PC-3 (cell line): ENCODE measurements at regions of chr1 and their contacts with region 1.

Region 1: GRCh38 chr1:176374967-176375569 is 87.9 kb upstream of the PAPPA2 start:
- DNase-seq: peak; percentile 74
- ATAC-seq: peak; percentile 78
- H3K4me3 ChIP-seq: no peak overlapping the region
- H3K27ac ChIP-seq: no peak overlapping the region
- H3K4me1 ChIP-seq: no peaks in the 10 kb centered on the region
- H3K27me3 ChIP-seq: no peaks in the 10 kb centered on the region; the same call in 1 of the 2 replicates
- CTCF ChIP-seq: peak; percentile 82

Region 2: GRCh38 chr1:176494436-176494835 is 119.4 kb after region 1 on chr1:
- CTCF ChIA-PET with region 1: no interaction called
- POLR2A ChIA-PET with region 1: no interaction called
- intact Hi-C with region 1: no loop called
- DNase-seq: no peak
- ATAC-seq: no peak
- H3K4me3 ChIP-seq: no peak overlapping the region
- H3K27ac ChIP-seq: no peak overlapping the region
- H3K4me1 ChIP-seq: no peaks in the 10 kb centered on the region
- H3K27me3 ChIP-seq: 0 out of 2 replicates have a peak, but pooled peaks cover 4% of the 10 kb centered on the region
- CTCF ChIP-seq: no peak

Region 3: DNA sequence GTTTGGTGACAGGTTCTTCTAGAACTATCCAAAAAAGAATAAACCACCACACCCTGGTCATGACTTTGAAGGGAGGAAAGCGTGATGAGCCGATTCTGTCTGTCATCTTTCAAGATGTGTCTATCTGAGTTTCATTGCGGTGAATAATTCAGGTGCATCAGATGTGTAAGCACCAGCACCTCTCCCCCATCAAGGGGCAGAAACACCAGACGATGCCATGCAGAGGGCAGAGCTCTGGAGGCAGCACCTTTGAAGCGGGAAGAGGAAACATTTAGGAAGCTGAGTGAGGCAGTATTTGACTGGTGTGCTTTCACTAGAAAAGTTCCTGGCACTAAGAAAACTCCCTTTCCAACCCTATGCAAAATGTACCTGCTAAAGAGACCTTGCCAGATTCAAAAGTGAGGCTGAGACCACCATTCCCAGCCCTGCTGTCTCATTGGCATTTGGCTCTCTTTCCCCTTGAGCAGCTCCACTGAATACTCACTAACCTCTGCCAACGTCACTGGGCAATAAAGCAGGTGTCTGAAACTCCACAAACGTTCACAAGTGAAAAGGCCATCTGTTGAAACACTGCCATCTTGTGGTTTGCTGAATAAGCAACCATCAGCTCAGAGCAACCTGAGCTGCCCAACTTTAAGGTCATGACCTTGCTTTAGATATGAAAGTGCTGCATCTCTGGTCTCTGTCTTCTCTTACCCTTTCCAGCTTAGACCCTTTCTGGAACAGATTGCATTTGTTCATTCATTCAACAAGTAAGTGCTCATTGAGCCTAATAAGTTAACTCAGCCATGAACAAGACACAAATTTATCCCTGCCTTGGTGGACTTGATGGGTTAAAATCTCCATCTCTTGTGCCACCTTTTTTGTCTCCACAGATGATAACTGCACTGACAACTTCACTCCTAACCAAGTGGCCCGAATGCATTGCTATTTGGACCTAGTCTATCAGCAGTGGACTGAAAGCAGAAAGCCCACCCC is 316.5 kb after region 1 on chr1:
- CTCF ChIA-PET with region 1: no interaction called
- POLR2A ChIA-PET with region 1: no interaction called
- intact Hi-C with region 1: loop called (anchors 5 kb)
- DNase-seq: peak; percentile 59
- ATAC-seq: peak; percentile 64
- H3K4me3 ChIP-seq: no peak overlapping the region
- H3K27ac ChIP-seq: no peak overlapping the region
- H3K4me1 ChIP-seq: peaks cover 3% of the 10 kb centered on the region
- H3K27me3 ChIP-seq: 0 out of 2 replicates have a peak, but pooled peaks cover 4% of the 10 kb centered on the region
- CTCF ChIP-seq: peak; percentile 77

Region 4: DNA sequence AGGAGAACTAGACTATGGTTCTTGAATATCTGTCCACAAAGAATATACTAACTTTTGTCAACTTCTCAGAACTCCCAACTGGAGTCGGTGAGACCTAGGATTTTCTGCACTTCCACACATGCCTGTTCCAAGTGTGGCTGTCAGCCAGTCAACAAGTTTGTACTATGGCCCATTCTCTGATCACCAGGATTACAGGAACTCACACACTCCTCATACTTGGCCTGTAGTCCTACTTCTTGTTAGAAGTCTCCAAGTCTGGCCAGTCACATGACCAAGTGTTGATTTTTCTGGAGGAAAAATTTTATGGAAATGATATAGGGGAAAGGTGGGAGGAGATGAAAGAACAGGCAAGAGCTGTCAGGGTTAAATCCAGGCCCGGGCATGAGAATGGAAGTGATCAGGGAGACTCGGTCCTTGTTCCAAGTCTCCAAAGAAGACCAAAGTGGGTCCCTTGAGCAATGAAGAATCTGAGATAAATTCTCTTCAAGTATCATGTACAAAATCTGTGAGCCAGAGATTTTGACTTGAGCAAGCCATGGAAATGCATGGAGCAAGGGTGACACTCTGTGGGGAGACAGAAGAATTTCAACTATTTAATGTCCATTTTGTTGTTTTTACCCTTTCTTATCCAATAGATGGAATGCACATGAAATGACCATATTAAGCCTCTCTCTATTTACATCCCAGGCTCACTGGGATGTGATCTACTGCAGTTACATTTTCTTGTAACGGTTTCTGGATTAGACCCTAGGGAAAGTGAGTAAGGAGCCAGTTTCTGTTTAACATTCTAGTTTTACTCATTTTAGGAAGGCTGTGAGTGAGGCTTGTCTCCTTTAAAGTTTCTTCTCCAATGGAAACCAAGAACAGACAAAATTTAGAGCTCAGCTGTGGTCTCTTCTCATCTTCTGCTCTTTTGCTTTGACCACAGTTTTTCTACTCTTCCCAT is 468.6 kb after region 1 on chr1:
- CTCF ChIA-PET with region 1: no interaction called
- POLR2A ChIA-PET with region 1: no interaction called
- intact Hi-C with region 1: loop called (anchors 1 kb)
- DNase-seq: peak; percentile 29
- ATAC-seq: no peak
- H3K4me3 ChIP-seq: no peak overlapping the region
- H3K27ac ChIP-seq: no peak overlapping the region
- H3K4me1 ChIP-seq: no peaks in the 10 kb centered on the region
- H3K27me3 ChIP-seq: peaks cover 17% of the 10 kb centered on the region; the same call in 1 of the 2 replicates
- CTCF ChIP-seq: peak; percentile 53

Region 5: GRCh38 chr1:176880954-176881595 is 506.0 kb after region 1 on chr1:
- CTCF ChIA-PET with region 1: interaction called, 3 read pairs
- POLR2A ChIA-PET with region 1: no interaction called
- intact Hi-C with region 1: loop called (anchors 1 kb)
- DNase-seq: peak; percentile 76
- ATAC-seq: peak; percentile 85
- H3K4me3 ChIP-seq: no peak overlapping the region
- H3K27ac ChIP-seq: no peak overlapping the region
- H3K4me1 ChIP-seq: no peaks in the 10 kb centered on the region
- H3K27me3 ChIP-seq: peaks cover 16% of the 10 kb centered on the region
- CTCF ChIP-seq: peak; percentile 80